Left cardiac atrium (tissue), 4 donors: ENCODE measurements at regions of chr4 and their contacts with region 1.

Region 1: GRCh38 chr4:164748375-164748774 is 5.6 kb upstream of the SMIM31 start:
- DNase-seq: no peak
- ATAC-seq: no peak

Region 2: GRCh38 chr4:163568843-163569242 is 1179.5 kb before region 1 on chr4:
- intact Hi-C with region 1: loop called in 1 of 2 experiments (anchors 10 kb)
- DNase-seq: no peak
- ATAC-seq: no peak

Region 3: DNA sequence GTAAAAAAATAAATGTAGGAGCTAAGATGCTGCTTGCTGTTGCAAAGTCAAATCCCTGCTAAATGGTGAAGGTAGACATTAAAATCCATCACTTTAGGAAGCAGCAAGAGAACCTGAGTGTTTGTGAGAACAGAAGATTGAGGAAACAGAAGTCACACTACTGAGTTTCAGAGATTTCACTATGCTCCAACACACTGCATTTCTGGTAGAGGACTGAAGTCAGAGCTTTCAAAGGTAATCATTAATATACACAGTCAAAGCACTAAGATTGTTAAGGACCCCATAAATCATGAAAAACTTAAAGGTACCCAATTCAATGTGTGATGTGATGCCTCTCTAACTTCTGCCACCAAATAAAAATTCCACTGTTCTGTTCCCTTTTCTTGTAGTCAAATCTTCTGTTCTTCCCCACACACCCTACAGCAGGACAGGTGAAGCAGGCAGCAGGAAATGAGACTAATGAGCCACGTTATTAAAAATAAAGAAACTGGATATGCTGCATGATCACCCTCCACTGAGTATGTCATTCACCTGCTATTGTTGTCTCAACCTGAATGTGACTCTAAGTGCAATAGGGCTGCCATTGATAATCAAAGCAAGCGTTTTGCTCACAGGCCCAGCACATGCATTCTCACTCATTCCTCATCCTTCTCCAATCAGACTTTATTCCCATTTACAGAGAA is 99.7 kb after region 1 on chr4:
- intact Hi-C with region 1: no loop called
- DNase-seq: no peak
- ATAC-seq: no peak

Region 4: GRCh38 chr4:165112368-165113139 is 364.2 kb after region 1 on chr4 and contains the start of gene TMEM192:
- intact Hi-C with region 1: no loop called
- DNase-seq: peak; percentile 93
- ATAC-seq: peak; percentile 99 to 100
- total RNA-seq, gene TMEM192: 16.5 to 17.2 TPM